Heart left ventricle (tissue), 16 donors: ENCODE measurements at regions of chr11 and their contacts with region 1.

Region 1: DNA sequence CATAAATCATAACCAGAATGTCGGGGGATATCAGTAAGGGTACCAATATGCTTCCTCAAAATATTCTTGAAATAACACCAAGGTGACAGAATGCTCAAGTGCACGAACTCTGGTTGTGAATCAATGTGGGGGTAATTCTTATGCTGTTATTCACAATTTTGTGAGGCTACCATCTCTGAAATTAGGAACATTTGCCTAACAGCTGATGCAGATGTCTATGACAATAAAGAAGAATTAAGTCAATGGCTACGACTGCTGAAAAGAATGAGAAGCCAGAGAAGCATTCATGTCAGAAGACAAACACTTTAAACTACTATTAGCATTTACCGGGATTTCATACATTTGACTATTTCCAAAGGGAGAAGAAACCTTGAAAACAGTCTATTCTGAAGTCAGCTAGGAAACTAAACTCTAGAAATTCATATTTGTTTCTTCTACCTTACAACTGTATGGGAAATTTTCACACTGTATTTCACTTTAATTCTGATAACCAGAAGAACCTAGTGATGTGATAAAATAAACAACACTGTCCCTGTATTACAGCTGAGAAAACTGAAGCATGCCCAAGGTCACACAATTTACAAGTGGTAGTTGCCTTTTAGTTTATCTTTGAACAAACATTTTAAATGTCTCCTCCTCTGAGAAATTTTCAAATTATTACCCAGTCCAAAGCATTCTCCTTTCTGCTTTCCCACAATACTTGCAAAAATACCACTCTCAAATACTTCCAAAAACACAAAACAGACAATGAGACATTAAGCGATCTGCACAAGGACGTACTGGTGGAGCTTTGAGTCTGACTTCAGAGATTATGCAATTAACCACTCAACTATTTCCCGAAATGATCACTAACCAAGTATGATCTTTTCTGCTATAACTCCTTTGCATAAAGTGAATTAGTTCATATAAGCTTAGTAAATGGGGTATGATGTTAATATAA is 18.0 kb upstream of the ARHGAP32 start:
- DNase-seq: no peak
- ATAC-seq: peak in 1 of 4 donors; percentile 28
- H3K4me3 ChIP-seq: no peak overlapping the region
- H3K27ac ChIP-seq: no peak overlapping the region
- H3K4me1 ChIP-seq: peaks cover 0 to 4% (median 0%) of the 10 kb centered on the region in 12 donors
- H3K27me3 ChIP-seq: no peaks in the 10 kb centered on the region
- CTCF ChIP-seq: no peak
- POLR2A ChIP-seq: no peak

Region 2: DNA sequence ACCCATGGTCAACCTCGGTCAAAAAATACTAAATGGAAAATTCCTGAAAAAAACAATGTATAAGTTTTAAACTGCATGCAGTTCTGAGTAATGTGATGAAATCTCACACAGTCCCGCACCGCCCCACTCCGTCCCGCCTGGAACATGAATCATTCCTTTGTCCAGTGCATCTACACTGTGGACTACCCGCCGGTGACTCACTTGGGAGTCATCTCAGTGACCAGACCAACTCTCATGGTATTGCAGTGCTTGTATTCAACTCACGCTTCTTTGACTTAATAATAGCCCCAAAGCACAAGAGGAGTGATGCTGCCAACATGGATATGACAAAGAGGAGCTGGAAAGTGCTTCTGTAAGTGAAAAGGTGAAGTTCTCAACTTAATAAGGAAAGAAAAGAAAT is 66.8 kb before region 1 on chr11:
- intact Hi-C with region 1: loop called in 1 of 10 experiments (anchors 10 kb)
- DNase-seq: peak; percentile 22 to 90 (median 75)
- ATAC-seq: peak in 3 of 4 donors; percentile 82 to 100 (median 100)
- H3K4me3 ChIP-seq: peak overlapping the region in 1 of 12 donors; percentile 6
- H3K27ac ChIP-seq: no peak overlapping the region
- H3K4me1 ChIP-seq: peaks cover 0 to 7% (median 0%) of the 10 kb centered on the region in 12 donors
- H3K27me3 ChIP-seq: no peaks in the 10 kb centered on the region
- CTCF ChIP-seq: no peak
- POLR2A ChIP-seq: no peak

Region 3: DNA sequence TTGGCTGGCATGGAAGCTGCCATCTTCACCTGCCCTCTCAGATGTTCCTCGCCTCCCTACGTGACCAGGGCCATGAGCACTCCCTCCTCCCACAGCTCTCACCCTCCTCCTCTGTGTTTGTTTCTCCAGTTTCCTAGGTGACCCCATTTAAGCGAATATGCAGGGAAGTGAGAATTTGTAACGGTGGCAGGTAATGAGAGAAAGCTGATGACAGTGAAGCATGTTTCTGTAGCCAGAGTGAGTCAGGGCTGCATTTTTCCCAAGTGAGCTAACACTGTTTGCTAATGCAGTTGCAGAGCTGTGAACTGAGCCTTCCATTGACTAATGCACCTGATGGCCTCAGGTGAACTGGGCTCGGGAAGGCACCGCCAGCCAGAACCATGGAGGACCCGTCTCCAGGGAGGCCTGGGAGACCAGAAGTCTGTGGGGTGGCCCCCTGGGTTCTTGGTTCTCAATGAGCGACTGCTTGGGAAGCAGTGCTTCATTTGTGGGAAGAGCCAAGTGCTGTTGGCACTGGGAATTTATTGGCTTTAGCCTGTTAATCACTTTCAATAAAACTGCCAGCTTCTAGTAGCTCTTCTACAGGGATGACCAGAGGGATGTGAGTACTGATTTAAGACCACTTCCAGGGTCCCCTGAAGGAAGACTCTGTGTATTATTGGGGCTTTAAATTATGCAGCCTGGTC is 230.0 kb after region 1 on chr11:
- intact Hi-C with region 1: no loop called
- DNase-seq: no peak
- ATAC-seq: no peak
- H3K4me3 ChIP-seq: no peak overlapping the region
- H3K27ac ChIP-seq: no peak overlapping the region
- H3K4me1 ChIP-seq: no peaks in the 10 kb centered on the region
- H3K27me3 ChIP-seq: no peaks in the 10 kb centered on the region
- CTCF ChIP-seq: no peak
- POLR2A ChIP-seq: no peak